ENCODE measurements at regions of chr2 and their contacts with region 1.

Region 1: DNA sequence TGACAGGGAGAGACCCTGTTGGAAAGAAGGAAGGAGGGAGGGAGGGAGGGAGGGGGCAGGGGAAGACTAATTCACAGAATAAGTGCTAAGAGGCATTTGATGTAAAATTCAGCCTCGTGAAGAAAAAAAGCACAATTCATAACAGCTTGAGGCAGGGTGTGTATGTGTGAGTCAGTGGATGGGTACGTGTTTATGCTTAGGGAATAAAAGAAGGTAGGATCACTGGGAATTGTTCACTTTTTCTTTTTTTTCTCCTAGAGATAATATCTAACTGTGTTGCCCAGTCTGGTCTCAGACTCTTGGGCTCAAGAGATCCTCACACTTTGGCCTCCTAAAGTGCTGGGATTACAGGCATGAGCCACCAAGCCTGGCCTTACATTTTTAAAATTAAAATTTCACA is 39.2 kb downstream of the WDR33 start:
- DNase-seq: no peak
- ATAC-seq: no peak
- H3K4me3 ChIP-seq: no peak overlapping the region
- H3K4me3 Mint-ChIP-seq: no peak overlapping the region
- H3K27ac ChIP-seq: no peak overlapping the region
- H3K27ac Mint-ChIP-seq: no peak overlapping the region
- H3K4me1 ChIP-seq: peaks cover 3% of the 10 kb centered on the region
- H3K4me1 Mint-ChIP-seq: peaks cover 37% of the 10 kb centered on the region
- H3K27me3 ChIP-seq: no peaks in the 10 kb centered on the region
- H3K27me3 Mint-ChIP-seq: no peaks in the 10 kb centered on the region
- CTCF ChIP-seq: no peak

Region 2: GRCh38 chr2:127753374-127753773 is 18.4 kb before region 1 on chr2:
- CTCF ChIA-PET with region 1: interaction called, 3 read pairs
- POLR2A ChIA-PET with region 1: interaction called, 3 read pairs
- intact Hi-C with region 1: loop called in 1 of 2 experiments (anchors 1 kb)
- DNase-seq: no peak
- ATAC-seq: no peak
- H3K4me3 ChIP-seq: no peak overlapping the region
- H3K4me3 Mint-ChIP-seq: no peak overlapping the region
- H3K27ac ChIP-seq: no peak overlapping the region
- H3K27ac Mint-ChIP-seq: no peak overlapping the region
- H3K4me1 ChIP-seq: no peaks in the 10 kb centered on the region
- H3K4me1 Mint-ChIP-seq: peaks cover 4% of the 10 kb centered on the region
- H3K27me3 ChIP-seq: no peaks in the 10 kb centered on the region
- H3K27me3 Mint-ChIP-seq: no peaks in the 10 kb centered on the region
- CTCF ChIP-seq: no peak

Region 3: GRCh38 chr2:127790694-127791529 is 19.2 kb after region 1 on chr2:
- CTCF ChIA-PET with region 1: no interaction called
- POLR2A ChIA-PET with region 1: no interaction called
- intact Hi-C with region 1: no loop called
- DNase-seq: no peak
- ATAC-seq: no peak
- H3K4me3 ChIP-seq: no peak overlapping the region
- H3K4me3 Mint-ChIP-seq: no peak overlapping the region
- H3K27ac ChIP-seq: no peak overlapping the region
- H3K27ac Mint-ChIP-seq: peak overlapping the region; percentile 33
- H3K4me1 ChIP-seq: peaks cover 13% of the 10 kb centered on the region
- H3K4me1 Mint-ChIP-seq: peaks cover 36% of the 10 kb centered on the region
- H3K27me3 ChIP-seq: no peaks in the 10 kb centered on the region
- H3K27me3 Mint-ChIP-seq: no peaks in the 10 kb centered on the region
- CTCF ChIP-seq: no peak